MCF 10A (cell line): ENCODE measurements at regions of chr20 and their contacts with region 1.

Region 1: DNA sequence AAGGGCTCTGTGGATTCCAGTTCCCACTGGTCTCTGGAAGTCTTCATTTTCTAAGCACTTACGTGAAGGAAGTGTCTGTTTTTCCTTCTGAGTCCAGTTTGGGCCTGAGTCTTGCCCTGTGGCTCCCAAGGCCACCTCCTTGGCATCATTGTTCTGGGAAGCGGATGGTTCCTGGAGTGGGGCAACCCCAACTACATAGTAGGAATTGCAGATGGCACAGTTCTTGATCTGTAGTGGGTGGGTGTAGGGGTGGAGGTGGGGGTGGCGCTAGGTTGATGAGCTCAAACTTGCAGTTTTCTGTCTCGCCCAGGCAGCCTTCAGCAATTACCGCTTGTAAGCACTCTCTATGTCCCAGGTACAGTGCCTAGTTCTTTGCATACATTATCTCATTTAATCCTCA is 7.2 kb upstream of the FERMT1 start:
- DNase-seq: no peak
- H3K4me3 Mint-ChIP-seq: no peak overlapping the region
- H3K27ac Mint-ChIP-seq: no peak overlapping the region
- H3K4me1 Mint-ChIP-seq: peaks cover 17% of the 10 kb centered on the region
- H3K27me3 Mint-ChIP-seq: no peaks in the 10 kb centered on the region
- CTCF ChIP-seq: no peak

Region 2: GRCh38 chr20:6142348-6142993 is 12.4 kb after region 1 on chr20:
- CTCF ChIA-PET with region 1: interaction called, 16 read pairs
- POLR2A ChIA-PET with region 1: interaction called, 3 read pairs
- intact Hi-C with region 1: no loop called
- DNase-seq: peak; percentile 71
- H3K4me3 Mint-ChIP-seq: no peak overlapping the region
- H3K27ac Mint-ChIP-seq: no peak overlapping the region
- H3K4me1 Mint-ChIP-seq: no peaks in the 10 kb centered on the region
- H3K27me3 Mint-ChIP-seq: peaks cover 1% of the 10 kb centered on the region
- CTCF ChIP-seq: peak; percentile 79

Region 3: GRCh38 chr20:7843613-7844012 is 1713.6 kb after region 1 on chr20:
- CTCF ChIA-PET with region 1: no interaction called
- POLR2A ChIA-PET with region 1: no interaction called
- intact Hi-C with region 1: no loop called
- DNase-seq: peak; percentile 93
- H3K4me3 Mint-ChIP-seq: no peak overlapping the region
- H3K27ac Mint-ChIP-seq: peak overlapping the region; percentile 90
- H3K4me1 Mint-ChIP-seq: peaks cover 32% of the 10 kb centered on the region
- H3K27me3 Mint-ChIP-seq: no peaks in the 10 kb centered on the region
- CTCF ChIP-seq: no peak